H1 (cell line): ENCODE measurements at regions of chr15 and their contacts with region 1.

Region 1: GRCh38 chr15:75751116-75751760 is 38.6 kb upstream of the CSPG4 start:
- DNase-seq: no peak
- H3K4me3 ChIP-seq: no peak overlapping the region
- H3K27ac ChIP-seq: no peak overlapping the region
- H3K4me1 ChIP-seq: 0 out of 7 replicates have a peak, but pooled peaks cover 0 to 2% (median 0%) of the 10 kb centered on the region in 4 experiments
- H3K27me3 ChIP-seq: no peaks in the 10 kb centered on the region
- CTCF ChIP-seq: no peak
- EP300 ChIP-seq: no peak
- POLR2A ChIP-seq: no peak
- RAD21 ChIP-seq: no peak

Region 2: GRCh38 chr15:75661091-75661777 is 90.0 kb before region 1 on chr15:
- CTCF ChIA-PET with region 1: no interaction called
- POLR2A ChIA-PET with region 1: no interaction called
- DNase-seq: peak; percentile 36 to 64
- H3K4me3 ChIP-seq: no peak overlapping the region
- H3K27ac ChIP-seq: no peak overlapping the region
- H3K4me1 ChIP-seq: peaks cover 0 to 6% (median 2%) of the 10 kb centered on the region in 4 experiments; a peak in 2 of 7 replicates
- H3K27me3 ChIP-seq: peaks cover 0 to 3% (median 0%) of the 10 kb centered on the region in 4 experiments; a peak in 1 of 7 replicates
- CTCF ChIP-seq: no peak
- EP300 ChIP-seq: no peak
- POLR2A ChIP-seq: no peak
- RAD21 ChIP-seq: no peak

Region 3: DNA sequence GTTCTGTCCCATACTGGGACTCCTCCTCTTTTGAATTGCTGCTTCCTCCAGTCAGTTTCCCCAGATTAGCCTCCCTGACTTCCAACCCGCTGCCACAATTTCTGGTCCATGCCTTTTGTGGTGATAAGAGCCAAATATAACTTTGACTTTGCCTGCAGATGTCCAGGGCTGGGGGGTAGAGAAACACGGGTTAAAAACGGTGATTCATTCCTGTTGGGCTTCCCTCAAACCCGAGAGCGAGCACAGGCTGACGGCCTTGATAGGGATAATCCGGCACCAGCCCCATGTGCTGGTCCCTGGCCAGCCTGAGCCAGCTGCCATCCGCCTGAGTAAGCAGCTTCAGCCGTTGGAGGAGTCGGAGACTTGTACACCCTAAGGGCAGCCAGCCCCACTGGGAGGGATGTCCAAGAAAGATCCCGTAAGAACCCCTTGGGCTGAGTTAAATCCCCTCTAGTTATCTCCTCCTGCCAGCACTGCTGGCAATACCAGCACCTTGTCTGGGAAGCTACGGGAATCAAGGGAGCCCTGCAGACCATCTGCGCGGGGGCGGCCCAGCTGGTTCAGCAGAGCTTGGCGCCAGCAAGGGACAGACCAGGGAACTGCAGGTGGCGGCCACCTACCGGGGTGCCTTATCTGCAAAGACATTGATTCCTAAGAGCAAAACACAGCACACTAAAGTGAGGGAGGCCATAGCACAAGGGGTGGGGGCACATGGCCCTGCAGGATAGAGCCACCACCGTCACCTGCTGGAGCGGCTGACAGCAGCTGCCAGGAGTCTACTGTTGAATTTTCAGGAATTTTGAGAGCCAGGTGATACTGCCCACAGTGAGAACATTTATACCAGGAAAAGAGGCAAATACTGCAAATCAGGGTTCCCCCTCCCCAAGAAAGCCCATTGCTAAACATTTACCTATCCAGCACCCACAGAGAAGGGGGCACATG is 56.7 kb before region 1 on chr15:
- CTCF ChIA-PET with region 1: no interaction called
- POLR2A ChIA-PET with region 1: no interaction called
- DNase-seq: peak in 1 of 2 experiments; percentile 75
- H3K4me3 ChIP-seq: no peak overlapping the region
- H3K27ac ChIP-seq: no peak overlapping the region
- H3K4me1 ChIP-seq: peaks cover 8 to 22% (median 13%) of the 10 kb centered on the region in 4 experiments
- H3K27me3 ChIP-seq: no peaks in the 10 kb centered on the region
- CTCF ChIP-seq: peak; percentile 14 to 46 (median 26)
- EP300 ChIP-seq: no peak
- POLR2A ChIP-seq: no peak
- RAD21 ChIP-seq: peak in 1 of 2 experiments; percentile 35; a peak in 3 of 4 replicates

Region 4: DNA sequence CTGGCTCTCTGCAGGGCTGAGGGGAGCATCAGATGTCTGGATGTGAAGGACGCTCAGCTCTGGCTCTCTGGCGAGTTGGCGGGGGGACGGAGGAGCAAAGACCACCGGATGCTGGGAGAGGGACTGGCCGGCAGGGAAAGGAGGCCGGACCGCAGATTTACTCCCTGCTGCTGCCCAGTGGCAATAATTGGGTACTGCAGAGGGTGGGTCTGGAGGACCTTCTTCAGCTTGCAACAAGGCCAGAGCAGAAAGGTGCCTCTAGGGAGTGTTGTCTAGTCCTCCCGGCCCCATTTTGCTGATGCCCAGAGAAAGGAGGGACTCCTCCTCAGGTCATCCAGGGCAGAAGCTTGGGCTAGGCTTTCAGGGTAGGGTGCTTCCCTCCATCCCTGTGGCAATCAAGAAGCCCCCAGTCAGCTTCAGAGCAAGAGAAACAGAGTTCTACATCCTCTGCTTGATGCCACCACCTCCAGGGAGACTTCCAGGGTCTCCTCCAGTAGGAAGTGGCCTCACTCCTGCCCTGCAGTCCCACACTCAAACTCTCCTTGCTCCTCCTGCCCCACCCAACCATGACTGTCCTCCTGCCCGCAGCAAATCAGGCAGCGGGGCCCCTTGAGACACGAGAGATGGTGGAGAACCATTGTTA is 18.3 kb before region 1 on chr15:
- CTCF ChIA-PET with region 1: interaction called, 16 read pairs
- POLR2A ChIA-PET with region 1: interaction called, 3 read pairs
- DNase-seq: peak; percentile 51 to 96
- H3K4me3 ChIP-seq: no peak overlapping the region
- H3K27ac ChIP-seq: no peak overlapping the region
- H3K4me1 ChIP-seq: peaks cover 2 to 7% (median 4%) of the 10 kb centered on the region in 4 experiments; a peak in 6 of 7 replicates
- H3K27me3 ChIP-seq: no peaks in the 10 kb centered on the region
- CTCF ChIP-seq: peak; percentile 81 to 91 (median 89)
- EP300 ChIP-seq: no peak
- POLR2A ChIP-seq: no peak
- RAD21 ChIP-seq: peak; percentile 54 to 69